IMR-90 (cell line): ENCODE measurements at regions of chr11 and their contacts with region 1.

Region 1: GRCh38 chr11:128956401-128957201 is 13.9 kb upstream of the TP53AIP1 start:
- DNase-seq: peak; percentile 78
- ATAC-seq: peak; percentile 83
- H3K4me3 ChIP-seq: no peak overlapping the region
- H3K27ac ChIP-seq: no peak overlapping the region
- H3K4me1 ChIP-seq: no peaks in the 10 kb centered on the region
- H3K27me3 ChIP-seq: peaks cover 10% of the 10 kb centered on the region
- CTCF ChIP-seq: peak; percentile 88
- POLR2A ChIP-seq: no peak
- RAD21 ChIP-seq: peak; percentile 90

Region 2: GRCh38 chr11:128890543-128891368 is 65.8 kb before region 1 on chr11 and contains the start of gene KCNJ5:
- CTCF ChIA-PET with region 1: interaction called, 71 read pairs
- POLR2A ChIA-PET with region 1: interaction called, 3 read pairs
- dilution Hi-C with region 1: no loop called
- in situ Hi-C with region 1: loop called (anchors 5 kb)
- intact Hi-C with region 1: no loop called
- DNase-seq: no peak
- ATAC-seq: peak; percentile 80
- H3K4me3 ChIP-seq: peak within 1 kb of the TSS; percentile 35
- H3K27ac ChIP-seq: no peak within 1 kb of the TSS
- H3K4me1 ChIP-seq: 0 out of 2 replicates have a peak, but pooled peaks cover 1% of the 10 kb centered on the region
- H3K27me3 ChIP-seq: peaks cover 60% of the 10 kb centered on the region
- CTCF ChIP-seq: no peak
- POLR2A ChIP-seq: no peak
- RAD21 ChIP-seq: no peak
- total RNA-seq, gene KCNJ5: 0.18 TPM in 1 of 2 replicates, not detected in the other

Region 3: GRCh38 chr11:128929991-128930390 is 26.6 kb before region 1 on chr11:
- CTCF ChIA-PET with region 1: no interaction called
- POLR2A ChIA-PET with region 1: no interaction called
- dilution Hi-C with region 1: no loop called
- in situ Hi-C with region 1: no loop called
- intact Hi-C with region 1: no loop called
- DNase-seq: peak; percentile 73
- ATAC-seq: peak; percentile 72
- H3K4me3 ChIP-seq: no peak overlapping the region
- H3K27ac ChIP-seq: no peak overlapping the region
- H3K4me1 ChIP-seq: peaks cover 3% of the 10 kb centered on the region; the same call in 1 of the 2 replicates
- H3K27me3 ChIP-seq: peaks cover 29% of the 10 kb centered on the region
- CTCF ChIP-seq: no peak
- POLR2A ChIP-seq: no peak
- RAD21 ChIP-seq: no peak

Region 4: GRCh38 chr11:129331871-129332274 is 375.3 kb after region 1 on chr11:
- CTCF ChIA-PET with region 1: interaction called, 3 read pairs
- POLR2A ChIA-PET with region 1: no interaction called
- dilution Hi-C with region 1: no loop called
- in situ Hi-C with region 1: no loop called
- intact Hi-C with region 1: loop called (anchors 5 kb)
- DNase-seq: peak; percentile 69
- ATAC-seq: peak; percentile 99
- H3K4me3 ChIP-seq: no peak overlapping the region
- H3K27ac ChIP-seq: no peak overlapping the region
- H3K4me1 ChIP-seq: no peaks in the 10 kb centered on the region
- H3K27me3 ChIP-seq: no peaks in the 10 kb centered on the region
- CTCF ChIP-seq: peak; percentile 92
- POLR2A ChIP-seq: no peak
- RAD21 ChIP-seq: peak; percentile 97